Endothelial cell of umbilical vein (primary cell): ENCODE measurements at regions of chr6 and their contacts with region 1.

Region 1: DNA sequence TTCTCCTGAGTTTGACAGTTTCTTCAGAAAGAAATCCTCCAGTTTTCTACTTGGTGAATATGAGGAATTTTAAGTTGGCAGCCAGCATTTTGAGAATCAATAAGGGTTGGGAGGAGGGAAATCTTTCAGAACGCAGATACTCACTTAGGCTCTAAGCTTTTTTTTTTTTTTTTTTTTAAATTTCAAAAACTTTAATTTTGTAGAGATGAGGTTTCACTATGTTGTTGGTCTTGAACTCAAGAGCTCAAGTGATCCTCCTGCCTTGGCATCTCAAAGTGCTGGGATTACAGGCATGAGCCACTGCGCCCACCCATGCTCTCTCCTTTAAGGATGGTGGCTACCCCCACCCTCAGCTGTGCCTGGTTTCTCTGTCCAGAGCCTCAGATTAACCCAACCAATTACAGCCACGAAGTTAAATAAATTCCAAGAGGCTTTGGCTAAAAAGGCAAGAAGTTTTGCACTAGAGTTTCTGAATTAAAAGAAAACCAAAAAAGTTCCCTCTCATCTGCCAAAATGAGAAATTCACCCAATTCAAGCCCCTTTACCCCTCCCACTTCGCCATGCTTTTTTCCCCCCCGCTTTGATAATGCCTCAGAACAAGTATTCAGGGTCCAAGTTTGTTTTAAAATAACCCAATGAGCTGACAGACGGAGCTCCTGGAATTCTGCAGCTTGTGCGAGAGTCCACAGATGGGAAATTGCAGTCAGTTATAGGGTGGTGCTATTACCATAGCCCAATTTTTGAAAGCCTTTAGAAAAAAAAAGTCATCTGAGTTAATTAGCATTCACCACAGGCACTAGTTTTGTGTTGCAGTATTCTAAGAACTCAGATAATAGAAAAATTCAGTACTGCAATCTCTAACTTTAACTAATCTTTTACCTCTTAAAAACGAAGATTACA is 94.3 kb upstream of the BEND3 start:
- DNase-seq: no peak
- H3K4me3 ChIP-seq: no peak overlapping the region
- H3K27ac ChIP-seq: no peak overlapping the region
- H3K4me1 ChIP-seq: no peaks in the 10 kb centered on the region
- H3K27me3 ChIP-seq: no peaks in the 10 kb centered on the region
- CTCF ChIP-seq: no peak
- POLR2A ChIP-seq: no peak

Region 2: DNA sequence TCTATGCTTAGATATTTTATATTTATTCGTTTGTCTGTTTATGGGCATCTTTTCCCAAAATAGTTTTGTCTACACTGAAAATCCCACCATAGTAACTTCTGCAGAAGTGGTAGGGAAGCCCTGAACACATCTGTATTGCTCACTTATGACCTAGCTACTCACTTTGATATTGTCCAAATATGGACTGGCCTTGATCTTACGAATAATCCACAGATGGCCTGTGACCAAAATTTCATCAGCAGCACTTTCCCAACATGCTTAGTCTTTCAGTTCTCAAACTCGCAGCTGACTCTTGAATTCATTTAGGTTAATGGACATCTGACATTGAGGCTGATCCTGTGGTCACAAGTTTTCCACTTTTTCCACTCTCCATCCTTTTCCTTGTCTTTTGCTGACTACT is 13.5 kb before region 1 on chr6:
- CTCF ChIA-PET with region 1: interaction called, 15 read pairs
- POLR2A ChIA-PET with region 1: no interaction called
- dilution Hi-C with region 1: no loop called
- intact Hi-C with region 1: no loop called
- DNase-seq: no peak
- H3K4me3 ChIP-seq: no peak overlapping the region
- H3K27ac ChIP-seq: no peak overlapping the region
- H3K4me1 ChIP-seq: no peaks in the 10 kb centered on the region
- H3K27me3 ChIP-seq: no peaks in the 10 kb centered on the region
- CTCF ChIP-seq: no peak
- POLR2A ChIP-seq: no peak